Activated naive CD4-positive, alpha-beta T cell treated with anti-CD3 and anti-CD28 coated beads for 36 hours (primary cell): ENCODE measurements at regions of chr1 and their contacts with region 1.

Region 1: GRCh38 chr1:58903514-58904298 is 119.9 kb upstream of the JUN start:
- DNase-seq: peak; percentile 90
- H3K4me3 Mint-ChIP-seq: peak overlapping the region; percentile 71
- H3K27ac Mint-ChIP-seq: peak overlapping the region; percentile 43
- H3K4me1 Mint-ChIP-seq: peaks cover 8% of the 10 kb centered on the region
- H3K27me3 Mint-ChIP-seq: no peaks in the 10 kb centered on the region

Region 2: GRCh38 chr1:58816072-58816746 is 87.5 kb before region 1 on chr1:
- CTCF ChIA-PET with region 1: no interaction called
- intact Hi-C with region 1: loop called (anchors 1 kb)
- DNase-seq: peak; percentile 90
- H3K4me3 Mint-ChIP-seq: peak overlapping the region; percentile 81
- H3K27ac Mint-ChIP-seq: peak overlapping the region; percentile 71
- H3K4me1 Mint-ChIP-seq: peaks cover 33% of the 10 kb centered on the region
- H3K27me3 Mint-ChIP-seq: no peaks in the 10 kb centered on the region

Region 3: GRCh38 chr1:58885998-58886397 is 17.7 kb before region 1 on chr1:
- CTCF ChIA-PET with region 1: no interaction called
- intact Hi-C with region 1: loop called (anchors 1 kb)
- DNase-seq: peak; percentile 64
- H3K4me3 Mint-ChIP-seq: no peak overlapping the region
- H3K27ac Mint-ChIP-seq: peak overlapping the region; percentile 25
- H3K4me1 Mint-ChIP-seq: peaks cover 43% of the 10 kb centered on the region
- H3K27me3 Mint-ChIP-seq: no peaks in the 10 kb centered on the region

Region 4: GRCh38 chr1:59020151-59020997 is 116.7 kb after region 1 on chr1:
- CTCF ChIA-PET with region 1: no interaction called
- intact Hi-C with region 1: loop called (anchors 5 kb)
- DNase-seq: peak; percentile 67
- H3K4me3 Mint-ChIP-seq: peak overlapping the region; percentile 47
- H3K27ac Mint-ChIP-seq: peak overlapping the region; percentile 75
- H3K4me1 Mint-ChIP-seq: peaks cover 22% of the 10 kb centered on the region
- H3K27me3 Mint-ChIP-seq: no peaks in the 10 kb centered on the region

Region 5: DNA sequence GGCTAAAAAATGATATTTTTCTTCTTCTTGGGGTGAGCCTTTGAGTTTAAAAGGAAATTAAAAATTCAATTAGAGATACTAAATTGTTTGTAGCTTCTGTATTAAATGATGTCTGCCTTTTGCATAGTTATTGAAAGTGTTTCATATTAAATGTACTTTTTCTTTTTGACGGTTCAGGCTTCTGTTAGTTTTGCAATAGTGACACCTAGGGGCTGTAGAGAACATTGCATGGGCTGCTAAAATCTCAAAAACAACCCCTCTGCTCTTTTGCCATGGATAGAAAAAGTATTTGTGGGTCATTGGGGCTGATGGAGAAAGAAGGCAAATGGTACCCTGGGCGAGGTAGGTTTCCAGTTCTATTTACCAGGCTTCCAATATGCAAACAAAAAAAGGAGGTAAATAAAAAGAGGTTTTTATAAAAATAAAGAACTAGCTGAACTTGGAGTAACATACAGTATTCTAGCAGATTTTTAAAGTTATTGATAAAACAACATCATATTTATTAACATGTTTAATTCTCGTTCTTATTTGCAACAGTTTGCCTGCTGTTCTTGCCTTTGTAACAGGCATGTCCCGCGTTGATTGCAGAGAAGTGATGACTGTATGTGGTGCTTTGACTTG is 795.6 kb after region 1 on chr1:
- CTCF ChIA-PET with region 1: no interaction called
- intact Hi-C with region 1: loop called (anchors 10 kb)
- DNase-seq: peak; percentile 19
- H3K4me3 Mint-ChIP-seq: no peak overlapping the region
- H3K27ac Mint-ChIP-seq: no peak overlapping the region
- H3K4me1 Mint-ChIP-seq: peaks cover 15% of the 10 kb centered on the region
- H3K27me3 Mint-ChIP-seq: no peaks in the 10 kb centered on the region

Region 6: DNA sequence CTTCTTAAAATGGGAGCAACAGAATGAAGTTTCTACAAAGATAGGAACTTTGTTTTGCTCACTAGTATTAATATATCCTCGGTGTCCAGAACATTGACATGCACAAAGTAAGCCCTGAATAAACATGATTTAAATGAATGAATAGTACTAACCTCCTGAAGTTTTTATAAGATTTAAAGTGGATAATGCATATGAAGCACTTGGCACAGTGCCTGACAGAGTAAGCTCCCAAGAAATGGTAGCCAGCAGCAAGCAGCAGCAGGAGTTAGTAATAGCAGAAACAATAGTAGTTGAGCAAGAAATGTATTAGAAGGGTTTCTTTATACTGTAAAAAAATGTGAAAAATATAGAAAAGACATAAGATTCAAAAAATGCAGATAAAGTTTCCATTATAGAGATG is 1427.9 kb after region 1 on chr1:
- CTCF ChIA-PET with region 1: no interaction called
- intact Hi-C with region 1: no loop called
- DNase-seq: no peak
- H3K4me3 Mint-ChIP-seq: no peak overlapping the region
- H3K27ac Mint-ChIP-seq: no peak overlapping the region
- H3K4me1 Mint-ChIP-seq: no peaks in the 10 kb centered on the region
- H3K27me3 Mint-ChIP-seq: peaks cover 3% of the 10 kb centered on the region